CD8-positive, alpha-beta memory T cell (primary cell): ENCODE measurements at regions of chr19 and their contacts with region 1.

Region 1: GRCh38 chr19:19663256-19664038 is at the start of gene ATP13A1:
- DNase-seq: peak; percentile 92 to 99 (median 95)
- H3K4me3 ChIP-seq: peak within 1 kb of the TSS; percentile 91
- H3K4me3 Mint-ChIP-seq: peak within 1 kb of the TSS; percentile 86 to 96 (median 92)
- H3K27ac ChIP-seq: peak within 1 kb of the TSS; percentile 94
- H3K27ac Mint-ChIP-seq: peak within 1 kb of the TSS; percentile 85 to 99 (median 98)
- H3K4me1 ChIP-seq: peaks cover 37% of the 10 kb centered on the region
- H3K4me1 Mint-ChIP-seq: peaks cover 33 to 51% (median 44%) of the 10 kb centered on the region in 3 donors
- H3K27me3 ChIP-seq: no peaks in the 10 kb centered on the region
- H3K27me3 Mint-ChIP-seq: peaks cover 0 to 1% of the 10 kb centered on the region in 2 donors
- total RNA-seq, gene ATP13A1: 92.1 to 93.6 TPM

Region 2: GRCh38 chr19:19686580-19686979 is 23.1 kb after region 1 on chr19:
- CTCF ChIA-PET with region 1: interaction called, 4 read pairs
- POLR2A ChIA-PET with region 1: interaction called, 12 read pairs
- DNase-seq: no peak
- H3K4me3 ChIP-seq: no peak overlapping the region
- H3K4me3 Mint-ChIP-seq: no peak overlapping the region
- H3K27ac ChIP-seq: no peak overlapping the region
- H3K27ac Mint-ChIP-seq: peak overlapping the region in 3 of 8 donors; percentile 18 to 46 (median 21)
- H3K4me1 ChIP-seq: no peaks in the 10 kb centered on the region
- H3K4me1 Mint-ChIP-seq: peaks cover 6 to 9% (median 8%) of the 10 kb centered on the region in 3 donors
- H3K27me3 ChIP-seq: no peaks in the 10 kb centered on the region
- H3K27me3 Mint-ChIP-seq: no peaks in the 10 kb centered on the region

Region 3: DNA sequence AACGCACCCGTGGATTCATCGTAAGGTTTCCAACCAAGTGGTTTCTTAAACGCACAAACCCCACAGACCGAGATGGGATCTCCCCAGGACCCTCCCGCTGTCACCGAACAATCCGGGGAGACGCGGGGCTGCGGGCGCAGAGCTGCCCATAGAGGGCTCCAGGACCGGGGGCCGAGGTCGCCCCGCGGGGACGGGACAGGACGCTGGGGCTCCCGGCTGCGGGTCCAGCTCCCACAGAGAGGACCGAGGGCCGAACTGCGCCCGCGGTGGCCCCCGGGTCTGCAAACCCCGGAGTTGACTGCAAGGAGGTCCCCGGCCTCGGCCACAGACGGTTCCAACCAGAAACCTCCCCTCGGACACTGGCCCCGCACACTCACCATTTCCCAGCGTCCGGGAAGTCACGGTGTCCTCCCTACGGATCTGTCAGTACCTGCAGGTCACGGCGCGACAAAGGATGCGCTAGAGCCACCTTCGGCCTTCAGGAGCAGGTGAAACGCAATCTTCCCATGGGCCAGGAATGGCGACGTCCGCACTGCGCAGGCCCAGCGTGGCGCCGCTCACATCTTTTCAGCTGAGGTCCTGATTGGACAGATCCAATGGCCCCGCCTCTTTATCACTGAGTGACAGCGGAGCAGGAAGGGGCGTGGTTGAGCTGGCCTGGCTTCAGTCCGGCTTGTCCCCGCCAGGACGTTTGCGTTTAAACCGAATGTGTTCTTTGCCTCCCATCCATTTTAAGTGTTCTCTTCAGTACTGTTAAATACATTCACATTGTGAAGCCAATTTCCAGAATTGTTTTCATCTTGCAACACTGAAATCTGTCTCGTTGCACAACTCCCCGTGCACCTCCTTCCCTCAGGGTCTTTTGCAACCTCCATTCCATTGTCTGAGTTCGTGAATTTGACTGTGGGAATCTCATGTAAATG is 69.4 kb after region 1 on chr19 and contains the start of gene ZNF14:
- CTCF ChIA-PET with region 1: interaction called, 5 read pairs
- POLR2A ChIA-PET with region 1: interaction called, 33 read pairs
- DNase-seq: peak; percentile 85 to 94 (median 88)
- H3K4me3 ChIP-seq: peak within 1 kb of the TSS; percentile 75
- H3K4me3 Mint-ChIP-seq: peak within 1 kb of the TSS; percentile 92 to 100 (median 99)
- H3K27ac ChIP-seq: peak within 1 kb of the TSS; percentile 90
- H3K27ac Mint-ChIP-seq: peak within 1 kb of the TSS; percentile 83 to 99 (median 97)
- H3K4me1 ChIP-seq: peaks cover 15% of the 10 kb centered on the region
- H3K4me1 Mint-ChIP-seq: peaks cover 28 to 45% (median 30%) of the 10 kb centered on the region in 3 donors
- H3K27me3 ChIP-seq: no peaks in the 10 kb centered on the region
- H3K27me3 Mint-ChIP-seq: peaks cover 0 to 2% of the 10 kb centered on the region in 2 donors
- total RNA-seq, gene ZNF14: 7.4 to 7.8 TPM

Region 4: DNA sequence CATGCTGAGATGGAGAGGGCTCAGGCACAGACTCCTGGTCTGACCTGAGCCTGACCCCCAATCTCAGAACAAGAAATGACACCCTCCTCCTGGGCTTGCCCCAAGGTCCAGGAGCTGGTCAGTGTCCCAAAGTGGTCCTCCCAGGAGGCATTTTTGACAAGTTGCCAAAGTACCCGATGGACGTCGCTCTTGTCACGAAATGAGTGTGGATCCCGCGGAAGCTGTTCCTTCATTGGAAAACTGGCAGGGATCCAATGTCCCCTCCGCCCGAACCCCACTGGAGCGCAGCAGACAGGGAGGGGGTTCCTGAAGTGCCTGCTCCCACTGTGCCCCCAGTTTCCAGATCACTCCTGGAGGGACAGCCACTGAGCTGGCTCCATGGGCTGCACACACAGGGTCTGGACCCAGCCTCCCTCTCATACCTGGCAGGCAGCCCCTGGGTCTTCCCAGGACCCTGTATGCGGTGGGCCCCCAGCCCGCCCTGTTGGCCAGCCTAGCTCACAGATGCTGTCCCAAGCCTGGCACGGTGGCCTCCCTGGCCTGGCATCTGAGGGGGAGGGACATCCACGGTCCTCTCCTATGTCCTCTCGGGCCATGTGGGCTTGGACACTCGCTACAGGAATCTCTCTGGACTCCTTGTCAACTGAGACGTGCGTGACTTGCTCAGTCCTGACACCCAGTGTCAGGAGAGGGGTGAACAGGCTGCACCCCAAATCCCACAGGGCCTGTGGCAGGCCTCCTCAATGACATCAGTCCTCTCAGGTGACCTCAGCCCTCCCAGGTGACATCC is 82.2 kb after region 1 on chr19:
- CTCF ChIA-PET with region 1: no interaction called
- POLR2A ChIA-PET with region 1: no interaction called
- DNase-seq: no peak
- H3K4me3 ChIP-seq: no peak overlapping the region
- H3K4me3 Mint-ChIP-seq: no peak overlapping the region
- H3K27ac ChIP-seq: no peak overlapping the region
- H3K27ac Mint-ChIP-seq: no peak overlapping the region
- H3K4me1 ChIP-seq: no peaks in the 10 kb centered on the region
- H3K4me1 Mint-ChIP-seq: no peaks in the 10 kb centered on the region
- H3K27me3 ChIP-seq: no peaks in the 10 kb centered on the region
- H3K27me3 Mint-ChIP-seq: no peaks in the 10 kb centered on the region

Region 5: DNA sequence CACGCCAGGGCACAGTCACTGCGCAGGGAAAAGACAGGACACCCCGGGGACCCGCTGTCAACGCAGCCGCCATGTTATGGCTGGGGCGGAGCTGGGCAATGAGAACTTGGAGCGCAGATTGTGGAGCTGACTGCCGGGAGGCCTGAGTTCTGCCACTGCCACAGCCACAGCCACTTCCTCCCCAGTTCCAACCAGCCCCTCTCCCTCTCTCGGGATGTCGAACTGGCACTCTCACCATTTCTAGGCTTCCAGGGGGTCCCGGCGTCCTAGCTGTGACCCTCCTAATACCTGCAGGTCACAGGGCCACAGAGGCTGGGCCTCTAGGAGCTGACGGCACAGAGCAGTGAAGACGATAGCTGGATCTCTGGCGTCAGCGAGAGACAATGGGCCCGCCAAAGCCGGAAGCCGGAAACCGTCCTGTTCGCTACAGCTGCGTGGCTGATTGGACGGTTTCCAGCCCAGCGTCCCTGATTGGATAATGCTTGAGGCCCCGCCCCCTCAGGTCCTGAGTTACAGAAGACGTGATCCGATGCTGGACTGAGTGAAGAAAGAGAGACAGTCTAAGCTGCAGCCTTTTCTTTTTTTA is 158.0 kb after region 1 on chr19 and contains the start of gene ZNF506:
- CTCF ChIA-PET with region 1: interaction called, 4 read pairs
- POLR2A ChIA-PET with region 1: interaction called, 35 read pairs
- DNase-seq: peak; percentile 96 to 99 (median 97)
- H3K4me3 ChIP-seq: peak within 1 kb of the TSS; percentile 95
- H3K4me3 Mint-ChIP-seq: peak within 1 kb of the TSS; percentile 96 to 100 (median 100)
- H3K27ac ChIP-seq: peak within 1 kb of the TSS; percentile 96
- H3K27ac Mint-ChIP-seq: peak within 1 kb of the TSS; percentile 99 to 100 (median 100)
- H3K4me1 ChIP-seq: peaks cover 35% of the 10 kb centered on the region
- H3K4me1 Mint-ChIP-seq: peaks cover 43 to 50% (median 49%) of the 10 kb centered on the region in 3 donors
- H3K27me3 ChIP-seq: no peaks in the 10 kb centered on the region
- H3K27me3 Mint-ChIP-seq: peaks cover 0 to 2% of the 10 kb centered on the region in 2 donors
- total RNA-seq, gene ZNF506: 27.8 to 28.3 TPM

Region 6: DNA sequence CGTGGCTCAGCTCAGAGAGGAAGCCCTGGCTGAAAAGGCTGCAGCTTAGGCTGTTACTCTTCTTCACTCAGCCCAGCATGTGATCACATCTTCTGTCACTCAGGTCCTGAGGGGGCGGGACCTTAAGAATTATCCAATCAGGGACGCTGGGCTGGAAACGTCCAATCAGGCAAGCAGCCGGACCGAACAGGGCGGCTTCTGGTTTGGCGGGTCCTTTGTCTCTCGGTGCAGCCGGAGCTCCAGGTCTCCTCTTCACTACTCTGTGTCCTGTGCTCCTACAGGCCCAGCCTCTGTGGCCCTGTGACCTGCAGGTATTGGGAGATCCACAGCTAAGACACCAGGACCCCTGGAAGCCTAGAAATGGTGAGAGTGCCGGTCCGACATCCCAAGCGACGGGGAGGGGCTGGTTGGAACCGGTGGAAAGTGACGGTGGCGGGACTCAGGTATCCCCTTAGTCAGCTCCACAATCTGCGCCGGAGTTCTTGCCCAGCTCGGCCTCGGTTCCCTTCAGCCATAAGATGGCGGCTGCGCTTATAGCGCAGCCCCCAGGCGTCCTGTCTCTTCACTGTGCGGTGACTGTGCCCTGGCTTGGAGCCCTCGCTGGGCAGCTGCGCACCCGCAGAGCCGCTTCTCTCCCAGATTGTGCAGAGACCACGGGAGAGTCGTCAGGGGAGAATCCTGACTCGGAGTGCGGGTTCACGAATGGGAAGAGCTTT is 237.4 kb after region 1 on chr19 and contains the start of gene ZNF93:
- CTCF ChIA-PET with region 1: no interaction called
- POLR2A ChIA-PET with region 1: interaction called, 19 read pairs
- DNase-seq: peak; percentile 80 to 93 (median 88)
- H3K4me3 ChIP-seq: peak within 1 kb of the TSS; percentile 91
- H3K4me3 Mint-ChIP-seq: peak within 1 kb of the TSS; percentile 90 to 99 (median 95)
- H3K27ac ChIP-seq: peak within 1 kb of the TSS; percentile 71
- H3K27ac Mint-ChIP-seq: peak within 1 kb of the TSS; percentile 45 to 96 (median 93)
- H3K4me1 ChIP-seq: peaks cover 8% of the 10 kb centered on the region
- H3K4me1 Mint-ChIP-seq: peaks cover 23 to 44% (median 32%) of the 10 kb centered on the region in 3 donors
- H3K27me3 ChIP-seq: no peaks in the 10 kb centered on the region
- H3K27me3 Mint-ChIP-seq: no peaks in the 10 kb centered on the region
- total RNA-seq, gene ZNF93: 8.6 to 9.1 TPM